ENCODE measurements at regions of chr5 and their contacts with region 1.

Region 1: DNA sequence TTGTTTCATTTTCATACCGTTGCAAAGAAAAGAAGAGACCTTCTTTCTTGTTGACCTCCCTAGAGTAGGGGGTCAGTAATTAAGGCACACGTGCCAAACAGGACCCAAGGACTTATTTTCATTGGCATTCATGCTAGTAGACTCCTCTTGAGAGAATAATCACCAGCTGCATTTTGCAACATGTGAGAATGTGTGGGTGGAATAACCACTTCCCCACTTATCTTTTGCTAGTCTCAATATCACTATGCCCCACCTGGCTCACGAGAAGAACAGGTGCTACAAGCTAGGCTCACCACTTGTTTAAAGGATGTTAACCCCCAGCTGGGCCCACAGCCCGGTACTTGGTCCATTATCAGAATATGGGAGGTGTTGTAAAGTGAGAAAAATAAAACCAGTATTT is 460.7 kb upstream of the MEF2C start:
- DNase-seq: no peak
- H3K4me3 ChIP-seq: no peak overlapping the region
- H3K27ac ChIP-seq: no peak overlapping the region
- H3K4me1 ChIP-seq: peaks cover 4% of the 10 kb centered on the region
- H3K27me3 ChIP-seq: no peaks in the 10 kb centered on the region
- CTCF ChIP-seq: no peak

Region 2: GRCh38 chr5:88729084-88729828 is 614.4 kb before region 1 on chr5:
- dilution Hi-C with region 1: loop called (anchors 25 kb)
- DNase-seq: peak; percentile 4
- H3K4me3 ChIP-seq: no peak overlapping the region
- H3K27ac ChIP-seq: no peak overlapping the region
- H3K4me1 ChIP-seq: no peaks in the 10 kb centered on the region
- H3K27me3 ChIP-seq: no peaks in the 10 kb centered on the region
- CTCF ChIP-seq: peak; percentile 41 to 52 (median 48)

Region 3: GRCh38 chr5:88883059-88883835 is 460.4 kb before region 1 on chr5 and contains the start of gene MEF2C:
- dilution Hi-C with region 1: no loop called
- DNase-seq: no peak
- H3K4me3 ChIP-seq: peak within 1 kb of the TSS; percentile 28 to 67 (median 65)
- H3K27ac ChIP-seq: no peak within 1 kb of the TSS
- H3K4me1 ChIP-seq: peaks cover 12% of the 10 kb centered on the region
- H3K27me3 ChIP-seq: peaks cover 26% of the 10 kb centered on the region
- CTCF ChIP-seq: no peak
- polyA plus RNA-seq, gene MEF2C: 0.07 to 0.13 TPM (median 0.10 TPM) in 3 replicates

Measured in keratinocyte (primary cell).